GM10248 (cell line): ENCODE measurements at regions of chr19 and their contacts with region 1.

Region 1: DNA sequence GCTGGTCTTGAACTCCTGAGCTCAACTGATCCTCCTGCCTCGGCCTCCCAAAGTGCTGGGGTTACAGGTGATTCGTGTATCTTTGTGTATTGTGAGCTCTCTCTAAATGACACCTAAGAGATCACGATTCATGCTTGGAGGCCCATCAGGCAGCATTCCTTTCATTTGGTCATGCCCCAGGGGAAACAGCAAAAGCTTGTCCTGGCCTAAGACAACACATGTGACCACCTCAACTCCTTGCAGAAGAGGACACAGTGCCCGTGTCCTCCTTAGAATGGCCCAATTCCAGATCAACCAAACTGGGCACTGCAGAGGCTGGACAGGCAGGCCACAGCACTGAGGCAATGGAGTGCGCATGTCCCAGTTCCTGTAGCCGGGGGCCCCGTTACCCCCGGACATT is 32.5 kb downstream of the ZC3H4 start:
- DNase-seq: no peak
- CTCF ChIP-seq: no peak

Region 2: DNA sequence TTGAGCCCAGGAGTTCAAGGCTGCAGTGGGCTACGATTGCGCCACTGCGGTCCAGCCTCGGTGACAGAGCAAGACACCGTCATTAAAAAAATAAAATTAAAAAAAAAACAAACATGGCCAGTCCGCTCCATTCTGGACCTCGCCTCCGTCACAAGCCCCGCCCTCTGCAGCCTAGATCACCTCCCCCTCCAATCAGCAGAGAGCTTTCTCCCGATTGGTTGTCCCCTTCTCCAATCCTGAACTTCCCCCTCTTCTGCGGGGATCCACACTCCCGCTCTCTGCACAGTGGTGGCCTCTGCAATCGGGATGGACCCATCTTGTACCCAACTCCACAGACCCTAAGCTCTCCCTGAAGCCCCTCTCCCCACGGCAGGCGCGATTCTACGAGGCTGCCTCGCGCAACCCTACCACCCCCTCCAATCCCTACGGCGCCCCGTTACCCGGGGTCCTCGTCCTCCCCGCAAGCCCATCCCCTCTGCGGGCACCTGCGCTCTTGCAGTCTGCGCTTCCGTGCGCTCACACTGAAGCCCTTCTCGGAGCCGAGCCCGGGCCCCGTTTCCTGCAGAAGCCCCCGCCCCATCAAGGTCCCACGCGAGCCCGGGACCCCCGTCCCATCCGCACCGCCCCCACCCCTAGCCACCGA is 33.2 kb before region 1 on chr19:
- CTCF ChIA-PET with region 1: no interaction called
- POLR2A ChIA-PET with region 1: no interaction called
- DNase-seq: peak; percentile 95
- CTCF ChIP-seq: no peak

Region 3: GRCh38 chr19:47094557-47095475 is 13.7 kb after region 1 on chr19:
- CTCF ChIA-PET with region 1: interaction called, 56 read pairs
- POLR2A ChIA-PET with region 1: no interaction called
- DNase-seq: peak; percentile 69
- CTCF ChIP-seq: no peak

Region 4: DNA sequence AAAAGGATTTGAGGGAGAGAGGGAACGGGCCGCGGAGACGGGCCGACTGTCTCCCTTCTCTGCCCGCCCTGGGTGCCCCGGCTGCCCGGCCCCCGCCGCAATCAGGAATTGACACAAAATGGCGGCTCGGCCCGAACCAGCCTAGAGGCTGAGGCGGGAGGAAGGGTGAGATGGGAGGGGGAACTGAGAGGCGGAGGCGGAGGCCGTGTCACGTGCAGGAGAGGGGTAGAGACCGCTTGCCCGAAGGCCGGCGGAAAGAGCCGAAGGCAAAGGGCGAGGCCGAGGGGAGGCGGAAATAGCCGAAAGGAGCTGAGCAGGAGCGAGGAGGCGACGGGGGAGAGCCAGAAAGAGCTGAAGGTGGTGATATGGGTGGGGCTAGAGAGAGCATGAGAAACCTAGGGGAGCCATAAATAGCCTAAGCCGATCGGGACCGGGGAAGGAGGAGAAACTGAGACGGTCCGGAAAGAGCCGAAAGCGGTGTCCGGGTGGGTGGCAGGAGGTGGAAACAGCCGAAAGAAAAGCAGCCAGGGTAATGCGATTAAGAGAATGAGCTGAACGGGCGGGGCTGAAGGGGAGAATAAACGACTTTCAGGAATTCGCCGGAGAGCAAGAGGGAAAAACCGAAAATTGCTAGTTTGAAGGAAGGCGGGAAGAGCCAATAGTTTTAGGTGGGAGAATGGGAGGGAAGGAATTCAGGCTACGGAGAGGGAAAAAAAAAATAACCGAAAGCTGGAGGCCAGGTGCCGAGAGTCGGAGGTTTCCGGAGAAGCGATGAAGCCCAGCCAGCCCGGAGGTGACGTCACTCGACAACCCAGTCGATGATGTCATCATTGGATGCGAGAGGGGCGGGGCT is 32.1 kb after region 1 on chr19 and contains the start of gene ZC3H4:
- CTCF ChIA-PET with region 1: interaction called, 57 read pairs
- POLR2A ChIA-PET with region 1: interaction called, 4 read pairs
- DNase-seq: peak; percentile 98
- CTCF ChIP-seq: no peak

Region 5: GRCh38 chr19:47130591-47131227 is 49.6 kb after region 1 on chr19 and contains the start of gene SAE1:
- CTCF ChIA-PET with region 1: interaction called, 90 read pairs
- POLR2A ChIA-PET with region 1: interaction called, 3 read pairs
- DNase-seq: peak; percentile 99
- CTCF ChIP-seq: peak; percentile 78